Activated B cell treated with CpG ODN at 0.5 μM for 24 hours (primary cell): ENCODE measurements at regions of chr1 and their contacts with region 1.

Region 1: DNA sequence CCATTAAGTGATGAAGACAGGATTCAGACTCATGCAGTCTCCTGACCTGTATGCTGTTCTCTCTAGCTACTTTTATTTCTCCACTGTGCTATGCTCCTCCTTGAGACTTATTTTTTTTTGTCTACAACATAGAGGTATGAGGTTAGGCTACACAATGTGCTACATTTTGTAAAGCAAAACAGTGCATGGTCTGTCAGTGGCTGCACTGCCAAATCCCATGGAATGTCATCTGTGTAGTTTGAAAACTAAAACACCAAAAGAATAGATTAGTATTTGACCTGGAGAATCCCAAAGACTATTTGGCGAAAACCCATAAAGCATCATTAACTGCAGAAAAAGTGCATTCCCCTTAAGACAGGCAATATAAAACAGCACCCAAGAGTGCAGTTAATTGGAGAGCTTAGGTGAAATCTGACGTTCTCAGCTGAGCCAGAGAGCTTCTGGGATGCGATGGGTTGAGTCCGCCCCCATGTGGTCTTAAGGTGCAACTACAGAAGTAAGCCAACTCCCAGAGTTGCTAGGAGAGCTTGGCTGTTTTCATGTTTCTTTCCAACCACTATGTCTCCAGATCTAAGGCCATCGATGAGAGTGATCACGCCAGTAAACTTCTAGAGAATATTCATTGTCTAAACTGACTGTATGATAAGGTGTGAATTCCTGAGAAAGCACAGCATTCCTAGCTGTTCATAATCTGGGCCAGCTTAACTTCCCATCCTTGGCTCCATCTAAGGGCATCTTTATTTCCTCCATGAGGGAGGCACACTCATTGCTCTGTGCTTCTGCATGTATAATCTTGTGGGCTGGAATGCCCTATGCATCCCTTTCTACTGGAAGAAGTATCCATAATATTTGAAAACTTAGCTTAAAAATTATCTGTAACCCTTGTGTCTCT is 20.7 kb upstream of the CYP2J2 start:
- DNase-seq: no peak
- ATAC-seq: peak; percentile 73
- H3K4me3 Mint-ChIP-seq: no peak overlapping the region
- H3K27ac Mint-ChIP-seq: no peak overlapping the region
- H3K4me1 Mint-ChIP-seq: no peaks in the 10 kb centered on the region
- H3K27me3 Mint-ChIP-seq: peaks cover 10% of the 10 kb centered on the region
- CTCF ChIP-seq: peak; percentile 64

Region 2: GRCh38 chr1:59879574-59879973 is 67.7 kb before region 1 on chr1:
- CTCF ChIA-PET with region 1: interaction called, 13 read pairs
- POLR2A ChIA-PET with region 1: no interaction called
- intact Hi-C with region 1: loop called (anchors 1 kb)
- DNase-seq: no peak
- ATAC-seq: no peak
- H3K4me3 Mint-ChIP-seq: no peak overlapping the region
- H3K27ac Mint-ChIP-seq: no peak overlapping the region
- H3K4me1 Mint-ChIP-seq: no peaks in the 10 kb centered on the region
- H3K27me3 Mint-ChIP-seq: no peaks in the 10 kb centered on the region
- CTCF ChIP-seq: no peak

Region 3: GRCh38 chr1:59903141-59903754 is 44.0 kb before region 1 on chr1:
- CTCF ChIA-PET with region 1: interaction called, 27 read pairs
- POLR2A ChIA-PET with region 1: no interaction called
- intact Hi-C with region 1: loop called (anchors 1 kb)
- DNase-seq: no peak
- ATAC-seq: peak; percentile 61
- H3K4me3 Mint-ChIP-seq: no peak overlapping the region
- H3K27ac Mint-ChIP-seq: no peak overlapping the region
- H3K4me1 Mint-ChIP-seq: peaks cover 3% of the 10 kb centered on the region
- H3K27me3 Mint-ChIP-seq: no peaks in the 10 kb centered on the region
- CTCF ChIP-seq: no peak

Region 4: GRCh38 chr1:59979666-59980065 is 32.4 kb after region 1 on chr1:
- CTCF ChIA-PET with region 1: no interaction called
- POLR2A ChIA-PET with region 1: no interaction called
- intact Hi-C with region 1: no loop called
- DNase-seq: no peak
- ATAC-seq: no peak
- H3K4me3 Mint-ChIP-seq: no peak overlapping the region
- H3K27ac Mint-ChIP-seq: no peak overlapping the region
- H3K4me1 Mint-ChIP-seq: no peaks in the 10 kb centered on the region
- H3K27me3 Mint-ChIP-seq: peaks cover 15% of the 10 kb centered on the region
- CTCF ChIP-seq: no peak

Region 5: GRCh38 chr1:60066001-60066400 is 118.7 kb after region 1 on chr1:
- CTCF ChIA-PET with region 1: no interaction called
- POLR2A ChIA-PET with region 1: no interaction called
- intact Hi-C with region 1: no loop called
- DNase-seq: no peak
- ATAC-seq: no peak
- H3K4me3 Mint-ChIP-seq: no peak overlapping the region
- H3K27ac Mint-ChIP-seq: no peak overlapping the region
- H3K4me1 Mint-ChIP-seq: no peaks in the 10 kb centered on the region
- H3K27me3 Mint-ChIP-seq: no peaks in the 10 kb centered on the region
- CTCF ChIP-seq: no peak

Region 6: GRCh38 chr1:60345621-60346020 is 398.3 kb after region 1 on chr1:
- CTCF ChIA-PET with region 1: no interaction called
- POLR2A ChIA-PET with region 1: no interaction called
- intact Hi-C with region 1: no loop called
- DNase-seq: no peak
- ATAC-seq: no peak
- H3K4me3 Mint-ChIP-seq: no peak overlapping the region
- H3K27ac Mint-ChIP-seq: no peak overlapping the region
- H3K4me1 Mint-ChIP-seq: no peaks in the 10 kb centered on the region
- H3K27me3 Mint-ChIP-seq: no peaks in the 10 kb centered on the region
- CTCF ChIP-seq: no peak

Region 7: DNA sequence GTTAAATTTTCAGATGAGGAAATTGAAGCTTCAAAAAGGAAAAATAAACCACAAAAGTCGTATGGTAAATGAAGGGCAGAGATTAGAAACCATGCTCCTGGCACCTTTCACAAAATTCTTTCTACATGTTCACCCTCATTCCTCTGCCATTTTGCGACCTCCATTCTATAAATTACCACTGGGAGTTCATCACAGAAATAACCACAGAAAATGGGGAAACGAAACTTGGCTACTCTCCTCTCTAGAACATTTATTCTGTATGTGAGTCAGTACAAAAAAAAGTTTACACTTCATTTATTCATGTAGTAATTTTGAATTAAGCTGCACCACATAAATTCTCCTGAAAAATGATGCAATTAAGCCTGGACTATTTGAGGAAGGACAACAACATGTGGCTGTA is 447.1 kb after region 1 on chr1:
- CTCF ChIA-PET with region 1: no interaction called
- POLR2A ChIA-PET with region 1: no interaction called
- intact Hi-C with region 1: no loop called
- DNase-seq: no peak
- ATAC-seq: no peak
- H3K4me3 Mint-ChIP-seq: no peak overlapping the region
- H3K27ac Mint-ChIP-seq: no peak overlapping the region
- H3K4me1 Mint-ChIP-seq: no peaks in the 10 kb centered on the region
- H3K27me3 Mint-ChIP-seq: no peaks in the 10 kb centered on the region
- CTCF ChIP-seq: no peak